RWPE1 (cell line): ENCODE measurements at regions of chr9 and their contacts with region 1.

Region 1: GRCh38 chr9:129737479-129738274 is 15.2 kb downstream of the PTGES start:
- DNase-seq: peak; percentile 92
- H3K27ac ChIP-seq: peak overlapping the region; percentile 65
- CTCF ChIP-seq: peak; percentile 99

Region 2: GRCh38 chr9:129557192-129558036 is 180.3 kb before region 1 on chr9:
- CTCF ChIA-PET with region 1: no interaction called
- POLR2A ChIA-PET with region 1: no interaction called
- DNase-seq: no peak
- H3K27ac ChIP-seq: 0 out of 2 replicates have a peak overlapping the region, but pooled peaks have one; percentile 1
- CTCF ChIP-seq: no peak

Region 3: GRCh38 chr9:129696938-129697650 is 40.6 kb before region 1 on chr9:
- CTCF ChIA-PET with region 1: interaction called, 10 read pairs
- POLR2A ChIA-PET with region 1: no interaction called
- DNase-seq: peak; percentile 70
- H3K27ac ChIP-seq: peak overlapping the region; percentile 21
- CTCF ChIP-seq: no peak

Region 4: DNA sequence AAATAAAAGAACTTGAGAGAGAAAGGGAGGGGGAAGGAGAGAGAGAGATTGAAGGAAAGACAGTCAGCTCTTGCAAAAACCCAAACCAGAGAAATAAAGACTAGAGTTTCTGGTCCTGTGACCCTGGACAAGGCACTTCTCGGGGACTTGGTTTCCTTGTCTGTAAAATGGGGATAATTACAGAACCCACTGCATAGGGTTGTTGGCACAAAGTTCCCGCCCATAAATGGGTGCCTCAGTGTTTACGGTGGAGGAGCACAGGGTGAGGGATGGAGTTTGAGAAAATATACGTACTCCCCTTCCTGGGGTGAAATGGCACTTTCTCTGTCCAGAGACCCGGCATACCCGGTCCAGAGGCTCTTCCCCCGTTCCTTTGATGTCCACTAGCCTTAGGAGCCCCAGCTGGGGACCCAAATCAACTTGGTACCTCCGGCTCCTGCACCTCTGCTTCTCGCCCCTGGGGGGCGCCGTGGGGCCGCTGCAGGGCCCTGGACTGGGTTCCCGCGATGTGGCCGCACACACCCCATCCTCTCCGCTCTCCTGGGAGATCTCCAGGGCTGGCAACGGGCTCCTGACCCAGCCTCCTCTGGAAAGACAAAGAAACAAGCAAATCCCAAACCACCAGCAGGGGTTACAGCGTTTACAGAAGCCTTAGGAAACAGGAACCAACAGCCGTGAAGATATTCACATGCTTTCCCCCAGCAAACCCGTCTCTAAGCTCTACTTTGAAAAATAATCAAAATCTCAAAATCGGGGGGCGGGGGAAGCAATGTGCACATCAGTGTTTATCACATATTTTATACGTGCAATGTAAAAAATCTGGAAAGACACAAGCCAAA is 11.1 kb before region 1 on chr9:
- CTCF ChIA-PET with region 1: interaction called, 42 read pairs
- POLR2A ChIA-PET with region 1: interaction called, 5 read pairs
- DNase-seq: peak; percentile 92
- H3K27ac ChIP-seq: no peak overlapping the region
- CTCF ChIP-seq: peak; percentile 100

Region 5: GRCh38 chr9:129776938-129777768 is 39.5 kb after region 1 on chr9:
- CTCF ChIA-PET with region 1: interaction called, 93 read pairs
- POLR2A ChIA-PET with region 1: no interaction called
- DNase-seq: peak; percentile 99
- H3K27ac ChIP-seq: peak overlapping the region; percentile 82
- CTCF ChIP-seq: no peak